Motor neuron (in vitro differentiated cells): ENCODE measurements at regions of chr1 and their contacts with region 1.

Region 1: GRCh38 chr1:43227143-43227764 is 42.5 kb upstream of the TMEM125 start:
- ATAC-seq: peak; percentile 71 to 97 (median 91)
- H3K4me3 ChIP-seq: no peak overlapping the region
- H3K27ac ChIP-seq: no peak overlapping the region
- H3K4me1 ChIP-seq: no peaks in the 10 kb centered on the region

Region 2: DNA sequence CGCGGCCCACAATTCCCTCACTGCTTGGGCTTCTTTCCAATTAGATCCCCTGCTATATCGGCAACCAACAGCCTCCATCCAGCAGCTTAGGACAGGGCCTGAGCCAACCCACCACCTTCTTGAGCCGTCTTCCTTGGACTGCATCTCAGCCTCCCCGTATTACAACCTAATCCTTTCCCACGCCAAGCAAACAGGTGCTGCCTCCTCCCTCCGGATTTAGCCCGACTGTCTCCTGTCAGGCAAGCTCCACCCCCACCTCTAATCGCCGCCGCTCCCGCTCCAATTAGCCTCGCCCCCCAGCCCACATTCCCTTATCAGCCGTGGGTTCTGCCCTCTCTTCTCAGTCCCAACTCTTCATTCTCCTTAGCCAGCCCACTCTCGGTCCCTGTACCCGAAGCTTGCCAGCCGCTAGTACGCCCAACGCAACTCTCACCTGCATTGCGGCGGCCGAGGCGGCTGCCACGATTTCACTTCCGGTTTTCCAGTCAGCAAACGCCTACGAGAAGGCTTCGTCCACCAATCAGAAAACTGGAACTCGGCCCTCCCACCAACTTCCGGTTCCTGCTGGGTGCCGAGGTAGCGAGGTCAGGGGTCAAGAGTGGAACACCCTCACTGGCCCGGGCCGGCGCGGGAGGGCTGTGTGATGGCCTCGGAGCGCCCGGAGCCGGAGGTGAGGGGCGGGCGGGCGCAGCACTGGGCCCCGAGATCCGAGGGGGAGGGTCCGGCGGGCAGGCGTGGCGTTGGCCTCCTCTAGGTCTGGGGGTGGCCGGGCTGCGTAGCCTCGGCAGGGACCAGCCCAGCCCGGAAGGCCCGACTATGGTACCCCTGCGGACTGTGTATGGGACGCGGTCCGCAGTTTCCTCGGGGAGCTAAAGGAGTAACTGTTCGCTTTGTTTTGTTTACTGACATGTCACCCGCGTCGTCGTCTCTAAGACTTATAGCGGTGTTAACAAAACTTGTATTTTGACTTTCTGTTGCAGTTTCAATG is 162.4 kb after region 1 on chr1 and contains the starts of genes MED8 and SZT2:
- in situ Hi-C with region 1: loop called in 2 of 9 experiments (anchors 25 kb)
- ATAC-seq: peak; percentile 93 to 98 (median 96)
- H3K4me3 ChIP-seq: peak within 1 kb of the TSS; percentile 66 to 87 (median 84)
- H3K27ac ChIP-seq: peak within 1 kb of the TSS; percentile 94 to 99
- H3K4me1 ChIP-seq: peaks cover 20 to 22% of the 10 kb centered on the region in 2 donors
- total RNA-seq, gene MED8: 22.7 to 121 (median 57.1) TPM
- total RNA-seq, gene SZT2: 14.3 to 73.8 (median 23.0) TPM

Region 3: DNA sequence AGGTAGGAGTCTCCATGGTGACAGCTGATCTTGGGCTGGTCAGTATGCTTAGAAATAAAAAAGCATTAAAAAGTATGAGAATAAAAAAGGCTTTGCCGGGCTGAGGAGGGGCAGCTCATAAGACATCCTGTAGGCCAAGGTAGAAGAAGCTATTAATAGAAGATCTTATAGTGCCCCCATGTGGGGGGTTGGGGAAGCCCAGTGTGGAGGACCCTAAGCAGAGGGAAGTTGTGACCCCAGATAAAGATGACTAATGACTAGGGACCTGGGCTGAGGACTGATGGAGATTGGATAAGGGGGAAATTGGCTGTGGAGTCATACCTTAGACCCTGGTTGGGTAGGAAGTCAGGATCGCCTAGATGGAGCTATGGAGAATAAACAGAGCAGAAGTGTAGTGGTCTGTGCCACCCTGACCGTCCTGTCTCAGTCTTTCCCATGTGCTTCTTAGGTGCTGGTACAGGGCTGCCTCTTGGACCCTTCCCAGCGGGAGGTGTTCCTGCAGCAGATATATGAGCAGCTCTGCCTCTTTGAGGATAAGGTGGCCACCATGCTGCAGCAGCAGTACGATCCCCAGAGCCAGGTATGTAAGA is 187.5 kb after region 1 on chr1:
- in situ Hi-C with region 1: loop called in 4 of 9 experiments (anchors 25 kb)
- ATAC-seq: peak; percentile 71 to 93 (median 75)
- H3K4me3 ChIP-seq: no peak overlapping the region
- H3K27ac ChIP-seq: no peak overlapping the region
- H3K4me1 ChIP-seq: no peaks in the 10 kb centered on the region